ENCODE measurements at regions of chr10 and their contacts with region 1.

Region 1: GRCh38 chr10:63629363-63630084 is 108.3 kb downstream of the REEP3 start:
- DNase-seq: peak; percentile 76 to 81 (median 77)
- H3K4me3 ChIP-seq: peak overlapping the region; percentile 59 to 70
- H3K4me3 Mint-ChIP-seq: peak overlapping the region; percentile 92 to 97 (median 95)
- H3K27ac ChIP-seq: peak overlapping the region; percentile 55
- H3K27ac Mint-ChIP-seq: peak overlapping the region; percentile 57 to 96 (median 92)
- H3K4me1 ChIP-seq: peaks cover 28% of the 10 kb centered on the region
- H3K4me1 Mint-ChIP-seq: peaks cover 17 to 29% (median 22%) of the 10 kb centered on the region in 4 donors
- H3K27me3 ChIP-seq: no peaks in the 10 kb centered on the region
- H3K27me3 Mint-ChIP-seq: no peaks in the 10 kb centered on the region

Region 2: DNA sequence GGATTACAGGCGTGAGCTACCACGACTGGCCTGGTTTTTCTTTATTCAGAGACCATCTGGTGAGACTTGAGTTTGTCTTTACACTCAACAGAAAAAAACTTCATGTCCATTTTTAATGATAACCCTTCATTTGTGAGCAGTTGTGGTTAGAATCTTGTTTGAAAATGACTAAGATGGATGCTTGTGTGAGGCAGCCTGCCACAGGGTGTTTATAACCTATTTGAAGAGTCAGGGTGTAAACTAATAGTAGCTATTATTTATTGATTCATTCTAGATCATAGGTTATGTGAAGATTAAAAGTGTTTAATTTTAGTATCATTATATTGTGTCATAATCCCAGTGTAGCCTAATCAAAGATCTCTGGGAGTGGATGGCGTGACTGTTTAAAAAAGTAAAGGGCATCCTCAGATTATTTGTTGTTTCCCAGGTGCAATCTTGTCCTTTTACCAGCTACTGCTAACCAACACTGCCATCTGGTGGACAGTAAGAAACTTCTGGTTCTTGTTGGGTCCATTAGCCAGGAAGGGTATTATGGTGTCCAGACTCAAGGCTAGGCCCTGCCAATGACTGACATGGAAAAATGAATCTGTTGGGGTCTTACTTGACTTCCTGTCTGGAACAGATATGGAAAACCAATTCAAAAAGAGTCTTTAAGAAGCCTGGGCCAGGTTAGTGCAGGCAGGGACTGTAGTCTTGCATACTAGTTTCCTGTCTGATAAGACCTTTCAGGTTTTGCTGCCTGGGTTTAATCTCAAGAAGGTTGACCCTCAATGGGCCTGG is 471.5 kb before region 1 on chr10:
- CTCF ChIA-PET with region 1: interaction called, 22 read pairs
- POLR2A ChIA-PET with region 1: no interaction called
- intact Hi-C with region 1: no loop called
- DNase-seq: peak; percentile 62 to 66 (median 64)
- H3K4me3 ChIP-seq: no peak overlapping the region
- H3K4me3 Mint-ChIP-seq: no peak overlapping the region
- H3K27ac ChIP-seq: no peak overlapping the region
- H3K27ac Mint-ChIP-seq: peak overlapping the region in 2 of 7 donors; percentile 47
- H3K4me1 ChIP-seq: no peaks in the 10 kb centered on the region
- H3K4me1 Mint-ChIP-seq: peaks cover 7 to 12% (median 9%) of the 10 kb centered on the region in 4 donors
- H3K27me3 ChIP-seq: no peaks in the 10 kb centered on the region
- H3K27me3 Mint-ChIP-seq: no peaks in the 10 kb centered on the region

Region 3: GRCh38 chr10:63217120-63217605 is 412.4 kb before region 1 on chr10:
- CTCF ChIA-PET with region 1: interaction called, 86 read pairs
- POLR2A ChIA-PET with region 1: interaction called, 9 read pairs
- intact Hi-C with region 1: loop called (anchors 1 kb)
- DNase-seq: peak in 4 of 5 donors; percentile 60 to 68 (median 64)
- H3K4me3 ChIP-seq: no peak overlapping the region
- H3K4me3 Mint-ChIP-seq: peak overlapping the region in 4 of 8 donors; percentile 3 to 61 (median 24)
- H3K27ac ChIP-seq: no peak overlapping the region
- H3K27ac Mint-ChIP-seq: peak overlapping the region in 6 of 7 donors; percentile 25 to 81 (median 68)
- H3K4me1 ChIP-seq: peaks cover 50% of the 10 kb centered on the region
- H3K4me1 Mint-ChIP-seq: peaks cover 41 to 61% (median 43%) of the 10 kb centered on the region in 4 donors
- H3K27me3 ChIP-seq: no peaks in the 10 kb centered on the region
- H3K27me3 Mint-ChIP-seq: no peaks in the 10 kb centered on the region

Region 4: GRCh38 chr10:63465293-63466143 is 164.0 kb before region 1 on chr10 and contains the start of gene JMJD1C:
- CTCF ChIA-PET with region 1: interaction called, 7 read pairs
- POLR2A ChIA-PET with region 1: interaction called, 5 read pairs
- intact Hi-C with region 1: loop called (anchors 2 kb)
- DNase-seq: peak; percentile 63 to 70 (median 67)
- H3K4me3 ChIP-seq: peak within 1 kb of the TSS; percentile 58 to 71
- H3K4me3 Mint-ChIP-seq: peak within 1 kb of the TSS; percentile 94 to 98 (median 96)
- H3K27ac ChIP-seq: peak within 1 kb of the TSS; percentile 58
- H3K27ac Mint-ChIP-seq: peak within 1 kb of the TSS; percentile 85 to 94 (median 93)
- H3K4me1 ChIP-seq: peaks cover 16% of the 10 kb centered on the region
- H3K4me1 Mint-ChIP-seq: peaks cover 17 to 31% (median 19%) of the 10 kb centered on the region in 4 donors
- H3K27me3 ChIP-seq: no peaks in the 10 kb centered on the region
- H3K27me3 Mint-ChIP-seq: no peaks in the 10 kb centered on the region
- total RNA-seq, gene JMJD1C: 113 to 115 TPM

Region 5: GRCh38 chr10:63614371-63614891 is 15.1 kb before region 1 on chr10:
- CTCF ChIA-PET with region 1: interaction called, 22 read pairs
- POLR2A ChIA-PET with region 1: interaction called, 4 read pairs
- intact Hi-C with region 1: no loop called
- DNase-seq: no peak
- H3K4me3 ChIP-seq: no peak overlapping the region
- H3K4me3 Mint-ChIP-seq: no peak overlapping the region
- H3K27ac ChIP-seq: no peak overlapping the region
- H3K27ac Mint-ChIP-seq: peak overlapping the region in 4 of 7 donors; percentile 29 to 85 (median 76)
- H3K4me1 ChIP-seq: no peaks in the 10 kb centered on the region
- H3K4me1 Mint-ChIP-seq: no peaks in the 10 kb centered on the region
- H3K27me3 ChIP-seq: no peaks in the 10 kb centered on the region
- H3K27me3 Mint-ChIP-seq: no peaks in the 10 kb centered on the region

Region 6: GRCh38 chr10:63738410-63738809 is 108.9 kb after region 1 on chr10:
- CTCF ChIA-PET with region 1: no interaction called
- POLR2A ChIA-PET with region 1: no interaction called
- intact Hi-C with region 1: no loop called
- DNase-seq: no peak
- H3K4me3 ChIP-seq: no peak overlapping the region
- H3K4me3 Mint-ChIP-seq: no peak overlapping the region
- H3K27ac ChIP-seq: no peak overlapping the region
- H3K27ac Mint-ChIP-seq: no peak overlapping the region
- H3K4me1 ChIP-seq: no peaks in the 10 kb centered on the region
- H3K4me1 Mint-ChIP-seq: no peaks in the 10 kb centered on the region
- H3K27me3 ChIP-seq: no peaks in the 10 kb centered on the region
- H3K27me3 Mint-ChIP-seq: peaks cover 5% of the 10 kb centered on the region in 2 donors

Region 7: DNA sequence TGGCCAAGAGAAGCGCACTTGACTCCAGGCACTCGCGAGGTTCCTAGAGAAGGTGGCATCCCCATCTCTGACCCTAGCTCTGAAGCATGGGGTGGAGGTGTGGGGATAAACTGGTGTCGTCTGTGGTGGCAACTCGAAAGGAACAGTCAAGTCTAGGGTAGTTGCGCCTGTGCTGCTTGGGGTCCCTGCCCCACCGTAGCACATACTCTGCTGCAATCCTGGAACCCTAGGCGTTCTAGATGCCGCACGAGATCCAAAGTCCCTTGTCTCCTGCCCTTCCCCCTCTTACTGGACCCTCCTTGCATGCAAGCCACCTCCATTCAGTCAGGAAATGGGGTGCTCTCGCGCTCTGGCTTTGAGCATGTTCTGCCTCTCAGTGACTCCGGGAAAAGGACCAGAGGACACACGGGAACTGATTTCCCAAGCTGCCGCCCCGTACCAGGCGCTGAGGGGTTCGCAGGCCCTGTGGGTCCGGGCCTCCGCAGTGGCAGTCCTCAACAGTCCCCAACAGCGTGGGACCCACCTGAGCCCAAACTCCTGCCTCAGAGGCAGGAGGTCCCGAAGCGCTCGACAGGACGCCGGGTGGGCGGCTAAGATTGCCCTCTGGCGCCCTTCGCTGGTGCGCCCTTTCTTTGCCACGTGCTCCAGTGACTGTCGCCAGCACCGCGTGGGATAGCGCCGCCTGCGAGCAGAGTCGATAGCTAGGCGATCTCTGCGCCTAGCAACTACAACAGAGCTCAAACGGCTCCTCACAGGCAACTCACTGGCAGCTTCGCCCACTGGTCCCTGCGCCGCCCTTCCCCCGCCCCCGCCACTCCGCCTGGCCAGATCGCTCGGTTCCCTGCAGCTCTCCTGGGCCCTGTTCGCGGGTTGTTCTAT is 343.7 kb after region 1 on chr10:
- CTCF ChIA-PET with region 1: no interaction called
- POLR2A ChIA-PET with region 1: no interaction called
- intact Hi-C with region 1: no loop called
- DNase-seq: no peak
- H3K4me3 ChIP-seq: no peak overlapping the region
- H3K4me3 Mint-ChIP-seq: no peak overlapping the region
- H3K27ac ChIP-seq: no peak overlapping the region
- H3K27ac Mint-ChIP-seq: no peak overlapping the region
- H3K4me1 ChIP-seq: no peaks in the 10 kb centered on the region
- H3K4me1 Mint-ChIP-seq: no peaks in the 10 kb centered on the region
- H3K27me3 ChIP-seq: no peaks in the 10 kb centered on the region
- H3K27me3 Mint-ChIP-seq: no peaks in the 10 kb centered on the region

Measured in CD4-positive, alpha-beta memory T cell (primary cell).